WTC11 (cell line): ENCODE measurements at regions of chr11 and their contacts with region 1.

Region 1: DNA sequence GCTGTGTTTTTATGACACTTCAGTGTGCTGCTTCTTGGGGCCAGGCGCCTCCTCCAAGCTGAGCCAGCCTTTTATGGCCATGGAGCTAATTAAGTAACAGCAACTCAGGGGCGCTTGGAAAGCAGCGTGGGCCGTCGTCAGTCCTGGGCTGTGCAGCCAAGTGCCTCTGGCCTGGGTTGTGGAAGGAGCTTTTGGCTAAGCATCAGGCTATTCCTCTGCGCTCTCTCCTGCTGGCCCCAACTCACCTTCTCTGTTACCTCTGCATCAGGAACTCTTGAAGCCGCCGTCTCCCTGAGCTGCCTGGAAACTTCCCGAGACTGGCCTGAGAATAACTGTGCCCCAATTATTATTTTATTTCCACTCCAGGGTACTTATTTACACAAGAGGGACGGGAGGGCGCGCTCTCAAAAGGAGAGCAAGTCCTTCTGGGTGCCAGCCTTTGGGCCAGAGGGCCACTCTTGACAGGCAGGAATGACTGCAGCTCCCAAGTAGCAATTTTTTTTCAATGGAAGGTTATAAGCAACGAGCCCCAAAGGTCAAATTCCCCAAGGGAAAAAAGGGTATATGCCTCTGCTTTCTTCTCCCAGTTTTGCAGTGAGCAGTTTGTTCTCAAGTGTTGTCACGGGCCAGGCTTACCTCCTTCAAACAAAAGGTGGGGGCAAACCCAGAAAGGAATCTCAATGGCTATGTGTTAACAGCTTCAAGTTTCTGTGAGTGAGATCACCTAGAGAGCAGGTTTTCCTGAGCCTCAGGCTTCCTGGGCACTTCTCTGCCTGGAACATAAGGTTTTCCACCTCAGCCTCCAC is 38.5 kb upstream of the NAV2 start:
- DNase-seq: no peak
- ATAC-seq: peak; percentile 52
- H3K4me3 Mint-ChIP-seq: no peak overlapping the region
- H3K27ac Mint-ChIP-seq: no peak overlapping the region
- H3K4me1 Mint-ChIP-seq: peaks cover 51% of the 10 kb centered on the region
- H3K27me3 Mint-ChIP-seq: no peaks in the 10 kb centered on the region; the same call in 1 of the 2 replicates
- CTCF ChIP-seq: no peak

Region 2: DNA sequence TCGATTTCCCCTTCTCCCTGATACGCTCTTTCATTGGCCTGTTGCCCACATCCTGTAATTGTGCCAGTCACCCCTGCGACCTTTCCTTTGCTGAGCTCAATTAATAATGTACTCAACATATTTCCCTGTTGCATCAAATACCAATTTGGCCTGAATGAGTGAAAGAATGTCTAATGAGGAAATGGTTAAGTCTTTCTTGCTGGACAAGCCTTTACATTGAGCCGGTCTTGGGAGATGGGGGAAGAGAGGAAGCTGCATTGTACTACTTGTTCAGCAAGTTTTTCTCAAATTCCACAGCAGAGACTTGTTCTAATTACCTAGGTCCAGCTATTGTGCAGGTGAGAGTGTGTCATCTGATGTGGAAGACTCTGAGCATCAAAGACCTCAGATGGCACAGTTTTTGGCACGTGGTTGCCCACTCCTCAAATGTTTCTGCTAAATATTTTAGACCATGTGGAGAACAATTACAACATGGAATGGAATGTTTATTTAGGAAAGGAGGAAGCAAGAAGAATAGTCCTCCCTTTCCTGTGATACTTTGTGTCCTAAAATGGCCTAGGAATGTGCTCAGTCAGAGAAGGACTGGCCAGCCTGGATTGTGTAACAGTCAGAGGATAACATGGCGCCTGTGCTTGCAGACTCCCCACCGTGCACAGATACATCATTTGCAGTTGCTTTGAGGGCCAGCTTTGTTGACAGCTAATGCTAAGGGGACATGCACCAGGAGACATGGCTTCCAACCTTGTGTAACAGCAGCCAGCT is 303.8 kb before region 1 on chr11:
- CTCF ChIA-PET with region 1: no interaction called
- POLR2A ChIA-PET with region 1: no interaction called
- DNase-seq: no peak
- ATAC-seq: no peak
- H3K4me3 Mint-ChIP-seq: no peak overlapping the region
- H3K27ac Mint-ChIP-seq: no peak overlapping the region
- H3K4me1 Mint-ChIP-seq: no peaks in the 10 kb centered on the region
- H3K27me3 Mint-ChIP-seq: no peaks in the 10 kb centered on the region; the same call in 1 of the 2 replicates
- CTCF ChIP-seq: no peak

Region 3: GRCh38 chr11:19398772-19399527 is 275.2 kb before region 1 on chr11:
- CTCF ChIA-PET with region 1: no interaction called
- POLR2A ChIA-PET with region 1: no interaction called
- DNase-seq: no peak
- ATAC-seq: no peak
- H3K4me3 Mint-ChIP-seq: no peak overlapping the region
- H3K27ac Mint-ChIP-seq: no peak overlapping the region
- H3K4me1 Mint-ChIP-seq: peaks cover 10% of the 10 kb centered on the region
- H3K27me3 Mint-ChIP-seq: no peaks in the 10 kb centered on the region
- CTCF ChIP-seq: no peak

Region 4: DNA sequence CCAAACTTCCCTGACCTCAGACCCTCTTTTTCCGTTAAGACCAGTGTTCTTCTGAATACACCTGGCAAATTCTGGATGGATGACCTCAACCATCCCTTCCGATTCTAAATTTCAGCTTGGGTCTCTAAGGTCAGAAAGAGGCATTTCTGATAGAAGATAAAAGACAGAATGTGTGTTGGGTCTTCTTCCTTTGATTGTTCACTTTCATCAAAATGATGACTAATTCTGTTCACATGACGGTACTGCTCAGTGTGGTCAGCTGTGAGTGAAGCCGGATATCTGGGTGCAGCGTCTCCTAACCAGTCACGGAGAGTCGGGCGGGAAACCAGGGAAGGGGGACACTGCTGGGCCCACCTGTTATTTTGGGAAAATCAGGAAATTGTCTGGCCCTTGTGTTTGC is 113.1 kb before region 1 on chr11:
- CTCF ChIA-PET with region 1: interaction called, 12 read pairs
- POLR2A ChIA-PET with region 1: no interaction called
- DNase-seq: no peak
- ATAC-seq: no peak
- H3K4me3 Mint-ChIP-seq: no peak overlapping the region
- H3K27ac Mint-ChIP-seq: no peak overlapping the region
- H3K4me1 Mint-ChIP-seq: peaks cover 20% of the 10 kb centered on the region
- H3K27me3 Mint-ChIP-seq: no peaks in the 10 kb centered on the region; the same call in 1 of the 2 replicates
- CTCF ChIP-seq: no peak

Region 5: GRCh38 chr11:19605520-19606371 is 68.4 kb before region 1 on chr11:
- CTCF ChIA-PET with region 1: no interaction called
- POLR2A ChIA-PET with region 1: no interaction called
- DNase-seq: no peak
- ATAC-seq: no peak
- H3K4me3 Mint-ChIP-seq: no peak overlapping the region
- H3K27ac Mint-ChIP-seq: no peak overlapping the region
- H3K4me1 Mint-ChIP-seq: peaks cover 9% of the 10 kb centered on the region
- H3K27me3 Mint-ChIP-seq: peaks cover 21% of the 10 kb centered on the region
- CTCF ChIP-seq: no peak

Region 6: GRCh38 chr11:19651653-19652052 is 22.5 kb before region 1 on chr11:
- CTCF ChIA-PET with region 1: no interaction called
- POLR2A ChIA-PET with region 1: no interaction called
- DNase-seq: no peak
- ATAC-seq: no peak
- H3K4me3 Mint-ChIP-seq: no peak overlapping the region
- H3K27ac Mint-ChIP-seq: no peak overlapping the region
- H3K4me1 Mint-ChIP-seq: no peaks in the 10 kb centered on the region
- H3K27me3 Mint-ChIP-seq: no peaks in the 10 kb centered on the region
- CTCF ChIP-seq: no peak